ENCODE measurements at regions of chr1 and their contacts with region 1.

Region 1: DNA sequence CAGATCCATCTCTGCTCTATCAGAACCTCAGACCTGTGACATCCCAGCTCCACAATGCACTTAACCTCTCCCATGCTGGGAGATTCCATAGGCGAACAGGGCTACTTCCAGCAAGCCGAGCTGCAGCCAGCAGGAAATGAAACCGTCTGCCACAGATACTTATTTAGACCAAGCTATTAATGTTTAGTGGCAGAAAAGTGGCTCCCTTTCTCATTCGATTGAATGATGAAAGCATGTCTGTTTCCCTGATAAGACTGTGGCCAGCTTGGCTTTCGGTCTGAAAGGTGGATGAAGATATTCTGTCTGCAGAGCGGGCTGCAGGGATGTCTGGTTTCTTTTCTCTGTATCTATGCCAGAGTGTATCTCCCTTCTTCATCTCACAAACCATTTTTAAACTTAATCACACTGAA is 146.4 kb downstream of the GREM2 start:
- DNase-seq: no peak
- H3K4me3 ChIP-seq: peak overlapping the region in 3 of 4 donors; percentile 8 to 25 (median 23)
- H3K27ac ChIP-seq: no peak overlapping the region
- H3K4me1 ChIP-seq: peaks cover 0 to 15% (median 14%) of the 10 kb centered on the region in 4 donors
- H3K27me3 ChIP-seq: no peaks in the 10 kb centered on the region
- CTCF ChIP-seq: no peak
- EP300 ChIP-seq: no peak
- POLR2A ChIP-seq: no peak

Region 2: GRCh38 chr1:240597153-240597745 is 131.7 kb after region 1 on chr1:
- intact Hi-C with region 1: loop called (anchors 5 kb)
- DNase-seq: no peak
- H3K4me3 ChIP-seq: peak overlapping the region; percentile 13 to 39 (median 39)
- H3K27ac ChIP-seq: peak overlapping the region; percentile 61 to 85 (median 76)
- H3K4me1 ChIP-seq: peaks cover 0 to 36% (median 22%) of the 10 kb centered on the region in 4 donors
- H3K27me3 ChIP-seq: no peaks in the 10 kb centered on the region
- CTCF ChIP-seq: no peak
- EP300 ChIP-seq: no peak
- POLR2A ChIP-seq: no peak

Region 3: DNA sequence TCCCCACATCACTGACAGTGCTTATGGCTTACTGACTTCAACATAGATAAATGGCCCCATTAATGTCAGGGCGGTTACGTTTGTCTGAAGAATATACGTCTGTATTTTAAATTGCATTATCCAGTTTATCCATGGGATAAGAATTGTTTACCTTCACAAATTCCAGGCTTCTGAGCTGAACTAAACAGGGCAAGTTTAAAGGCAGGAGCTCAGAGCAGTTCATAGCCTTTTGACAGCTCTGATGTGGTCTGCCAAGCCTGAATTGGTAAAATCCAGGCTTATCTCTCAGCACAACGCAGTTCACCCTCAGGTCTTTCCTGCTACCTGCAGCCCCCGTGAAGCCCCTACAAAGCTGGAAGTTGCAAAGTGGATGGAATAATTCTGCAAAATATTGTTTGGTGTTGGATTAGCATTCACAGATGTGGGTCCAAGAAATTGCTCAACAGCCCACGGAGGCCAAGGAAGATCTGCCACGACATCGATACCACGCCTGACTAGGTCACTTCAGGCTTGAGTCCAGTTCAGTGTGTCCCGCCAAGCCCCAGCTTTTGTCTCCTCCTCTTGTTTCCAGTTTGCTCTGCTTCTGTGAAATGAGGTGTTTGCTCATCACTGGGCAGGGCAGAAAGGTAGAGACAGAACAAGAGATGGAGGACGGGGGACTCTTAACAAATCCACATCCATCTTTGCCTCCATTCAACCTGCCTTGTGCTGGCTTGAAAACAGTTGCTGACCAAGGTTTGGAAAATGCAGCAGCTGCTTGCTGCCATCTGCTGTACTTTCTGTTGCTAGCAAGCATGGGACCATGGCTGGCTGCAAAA is 226.2 kb after region 1 on chr1:
- intact Hi-C with region 1: loop called (anchors 5 kb)
- DNase-seq: peak; percentile 69
- H3K4me3 ChIP-seq: peak overlapping the region in 2 of 4 donors; percentile 12 to 15
- H3K27ac ChIP-seq: peak overlapping the region; percentile 14 to 72 (median 67)
- H3K4me1 ChIP-seq: peaks cover 0 to 36% (median 33%) of the 10 kb centered on the region in 4 donors
- H3K27me3 ChIP-seq: no peaks in the 10 kb centered on the region
- CTCF ChIP-seq: peak; percentile 69 to 88 (median 74)
- EP300 ChIP-seq: no peak
- POLR2A ChIP-seq: no peak

Measured in sigmoid colon (tissue), 7 donors.